Activated B cell treated with CpG ODN at 0.5 μM for 24 hours (primary cell): ENCODE measurements at regions of chr11 and their contacts with region 1.

Region 1: GRCh38 chr11:119196833-119197483 is 9.2 kb upstream of the CBL start:
- DNase-seq: no peak
- ATAC-seq: peak; percentile 98
- H3K4me3 Mint-ChIP-seq: no peak overlapping the region
- H3K27ac Mint-ChIP-seq: no peak overlapping the region
- H3K4me1 Mint-ChIP-seq: peaks cover 5% of the 10 kb centered on the region
- H3K27me3 Mint-ChIP-seq: no peaks in the 10 kb centered on the region
- CTCF ChIP-seq: peak; percentile 21

Region 2: DNA sequence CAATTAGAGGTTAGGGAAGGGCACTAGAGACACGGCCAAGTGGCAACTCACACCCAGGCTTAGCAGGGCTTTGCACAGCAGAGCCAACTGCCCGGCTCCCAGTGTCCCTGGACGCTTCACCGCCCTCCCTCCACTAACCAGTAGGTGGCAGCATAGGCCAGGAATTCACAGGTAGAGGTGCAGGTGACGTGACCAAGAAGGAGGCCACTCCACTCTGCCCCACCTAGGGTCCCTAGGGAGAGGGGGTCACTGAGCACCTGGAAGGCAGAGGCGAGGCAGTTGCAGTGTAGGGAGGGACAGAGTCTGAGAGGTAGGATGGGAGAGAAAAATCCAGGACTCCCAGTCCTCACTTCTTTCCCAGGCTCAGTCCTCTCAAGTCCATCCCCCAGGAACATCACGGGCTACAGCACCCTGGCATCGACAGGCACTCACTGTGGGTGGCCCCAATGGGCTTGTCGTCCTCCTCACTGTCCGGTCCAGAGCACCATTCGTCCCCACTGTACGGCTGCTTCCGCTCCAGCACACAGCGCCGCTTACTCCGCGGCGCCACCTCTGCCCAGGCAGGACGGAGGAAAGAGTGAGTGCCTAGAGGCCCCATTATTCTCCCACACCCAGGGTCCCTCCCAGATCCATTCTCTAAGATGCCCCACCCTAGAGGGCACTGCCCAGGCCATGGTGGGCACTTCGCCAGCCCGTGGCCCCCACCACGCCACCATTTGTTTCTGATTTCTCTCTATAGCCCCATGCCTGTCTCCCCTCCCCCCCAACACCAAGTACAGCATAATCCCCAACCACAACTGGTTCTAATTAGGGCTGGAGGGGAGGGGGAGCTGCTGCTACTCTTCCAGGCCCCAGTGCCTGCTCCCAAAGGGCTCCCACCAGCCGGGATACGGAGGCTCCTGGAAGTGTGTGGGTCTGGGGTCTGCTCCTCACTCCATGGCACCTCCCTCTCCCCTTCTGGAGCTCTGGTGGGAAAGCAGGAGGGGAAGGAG is 289.6 kb before region 1 on chr11:
- CTCF ChIA-PET with region 1: no interaction called
- POLR2A ChIA-PET with region 1: no interaction called
- intact Hi-C with region 1: loop called (anchors 2 kb)
- DNase-seq: peak; percentile 77
- ATAC-seq: peak; percentile 85
- H3K4me3 Mint-ChIP-seq: no peak overlapping the region
- H3K27ac Mint-ChIP-seq: peak overlapping the region; percentile 53
- H3K4me1 Mint-ChIP-seq: peaks cover 39% of the 10 kb centered on the region
- H3K27me3 Mint-ChIP-seq: no peaks in the 10 kb centered on the region
- CTCF ChIP-seq: peak; percentile 64

Region 3: DNA sequence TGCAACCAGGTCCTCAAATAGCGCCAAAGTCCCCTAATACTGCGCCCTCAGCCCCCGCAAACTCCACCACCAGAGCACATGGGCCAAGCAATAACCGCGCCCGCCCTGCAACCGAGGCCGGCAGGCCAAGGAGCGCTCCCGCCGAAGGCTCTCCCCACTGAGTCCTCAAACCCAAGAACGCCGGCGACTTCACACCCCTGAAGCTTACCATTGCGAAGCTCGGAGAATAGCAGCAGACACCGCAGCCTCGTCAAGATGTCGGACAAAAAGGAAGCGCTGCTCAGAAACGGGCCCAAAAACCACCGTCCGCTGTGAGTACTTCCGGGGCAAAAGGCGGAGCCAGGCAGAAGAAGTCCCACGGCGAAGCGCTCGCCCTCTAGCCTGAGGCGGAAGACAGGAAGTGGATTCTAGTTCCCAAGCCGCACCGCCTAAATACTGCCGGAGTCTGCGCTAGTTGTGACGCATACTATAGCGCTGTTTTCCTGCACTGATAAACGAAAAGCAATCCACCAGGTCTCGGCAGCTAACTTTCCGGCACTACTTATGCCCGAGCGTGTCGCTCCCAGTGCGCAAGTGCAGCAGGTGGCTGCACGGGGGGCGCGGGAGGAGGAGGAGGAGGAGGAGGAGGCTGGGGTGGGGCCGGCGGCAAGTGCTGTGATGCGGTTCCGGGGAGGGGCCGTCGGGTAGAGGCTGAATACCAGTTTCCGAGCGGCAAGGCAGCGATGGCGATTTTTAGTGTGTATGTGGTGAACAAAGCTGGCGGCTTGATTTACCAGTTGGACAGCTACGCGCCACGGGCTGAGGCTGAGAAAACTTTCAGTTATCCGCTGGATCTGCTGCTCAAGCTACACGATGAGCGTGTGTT is 178.7 kb before region 1 on chr11 and contains the starts of genes RPS25 and TRAPPC4:
- CTCF ChIA-PET with region 1: no interaction called
- POLR2A ChIA-PET with region 1: no interaction called
- intact Hi-C with region 1: loop called (anchors 5 kb)
- DNase-seq: peak; percentile 90
- ATAC-seq: peak; percentile 87
- H3K4me3 Mint-ChIP-seq: peak within 1 kb of the TSS; percentile 99
- H3K27ac Mint-ChIP-seq: peak within 1 kb of the TSS; percentile 100
- H3K4me1 Mint-ChIP-seq: peaks cover 54% of the 10 kb centered on the region
- H3K27me3 Mint-ChIP-seq: no peaks in the 10 kb centered on the region
- CTCF ChIP-seq: no peak
- total RNA-seq, gene RPS25: 2,191 and 2,534 TPM in 2 replicates
- total RNA-seq, gene TRAPPC4: 56.8 and 60.1 TPM in 2 replicates

Region 4: GRCh38 chr11:119057000-119057769 is 139.8 kb before region 1 on chr11 and contains the start of gene HYOU1:
- CTCF ChIA-PET with region 1: no interaction called
- POLR2A ChIA-PET with region 1: no interaction called
- intact Hi-C with region 1: loop called (anchors 2 kb)
- DNase-seq: peak; percentile 97
- ATAC-seq: peak; percentile 94
- H3K4me3 Mint-ChIP-seq: peak within 1 kb of the TSS; percentile 96
- H3K27ac Mint-ChIP-seq: peak within 1 kb of the TSS; percentile 95
- H3K4me1 Mint-ChIP-seq: peaks cover 40% of the 10 kb centered on the region
- H3K27me3 Mint-ChIP-seq: no peaks in the 10 kb centered on the region
- CTCF ChIP-seq: no peak
- total RNA-seq, gene HYOU1: 120 and 122 TPM in 2 replicates

Region 5: GRCh38 chr11:119144825-119145486 is 52.0 kb before region 1 on chr11:
- CTCF ChIA-PET with region 1: interaction called, 3 read pairs
- POLR2A ChIA-PET with region 1: no interaction called
- intact Hi-C with region 1: loop called (anchors 1 kb)
- DNase-seq: no peak
- ATAC-seq: peak; percentile 78
- H3K4me3 Mint-ChIP-seq: no peak overlapping the region
- H3K27ac Mint-ChIP-seq: no peak overlapping the region
- H3K4me1 Mint-ChIP-seq: peaks cover 12% of the 10 kb centered on the region
- H3K27me3 Mint-ChIP-seq: peaks cover 41% of the 10 kb centered on the region
- CTCF ChIP-seq: no peak

Region 6: GRCh38 chr11:119168471-119169281 is 28.3 kb before region 1 on chr11 and contains the start of gene NLRX1:
- CTCF ChIA-PET with region 1: interaction called, 23 read pairs
- POLR2A ChIA-PET with region 1: interaction called, 6 read pairs
- intact Hi-C with region 1: loop called (anchors 1 kb)
- DNase-seq: peak; percentile 74
- ATAC-seq: peak; percentile 97
- H3K4me3 Mint-ChIP-seq: peak within 1 kb of the TSS; percentile 86
- H3K27ac Mint-ChIP-seq: peak within 1 kb of the TSS; percentile 50
- H3K4me1 Mint-ChIP-seq: peaks cover 5% of the 10 kb centered on the region
- H3K27me3 Mint-ChIP-seq: no peaks in the 10 kb centered on the region
- CTCF ChIP-seq: peak; percentile 69
- total RNA-seq, gene NLRX1: 9.8 TPM in 2 replicates